H1 (cell line): ENCODE measurements at regions of chr9 and their contacts with region 1.

Region 1: DNA sequence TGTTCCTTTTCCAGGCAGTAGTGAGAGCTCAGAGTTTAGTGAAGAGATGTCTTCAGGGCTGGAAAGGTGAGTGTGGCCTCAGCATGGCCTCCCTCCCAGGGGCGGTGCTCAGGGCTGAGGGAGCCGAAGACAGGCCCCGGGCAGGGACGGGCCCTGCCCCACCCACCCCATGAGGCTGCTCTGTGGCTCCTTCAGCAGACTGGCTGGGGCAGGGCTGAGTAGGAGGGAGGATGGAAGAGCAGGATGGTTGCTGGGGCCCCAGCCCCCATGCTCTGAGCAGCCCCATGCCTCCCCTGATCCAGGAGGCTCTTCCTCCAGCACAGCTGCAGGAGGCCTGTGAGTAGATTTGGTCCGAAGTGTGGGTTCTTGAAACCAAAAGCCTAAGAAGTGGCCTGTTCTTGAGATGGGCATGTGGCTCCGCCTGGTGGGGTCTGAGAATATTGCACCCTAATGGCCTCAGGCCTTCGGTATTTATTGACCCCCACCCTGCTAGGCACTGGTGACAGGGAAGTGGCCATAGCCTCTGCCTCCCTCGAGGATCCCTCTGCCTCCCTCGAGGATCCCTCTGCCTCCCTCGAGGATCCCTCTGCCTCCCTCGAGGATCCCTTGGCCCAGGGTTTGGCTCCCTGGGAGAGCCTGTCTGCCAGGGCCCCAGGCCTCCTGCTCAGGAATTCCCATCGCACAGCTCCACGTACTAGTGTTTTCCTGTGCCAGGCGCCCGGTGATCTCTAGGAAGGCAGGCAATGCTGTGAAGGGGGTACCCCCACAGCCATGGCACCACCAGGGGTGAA is 65.4 kb upstream of the GARNL3 start:
- DNase-seq: peak; percentile 77 to 98
- H3K4me3 ChIP-seq: no peak overlapping the region
- H3K27ac ChIP-seq: no peak overlapping the region
- H3K4me1 ChIP-seq: peaks cover 0 to 4% (median under 1%) of the 10 kb centered on the region in 4 experiments; a peak in 4 of 7 replicates
- H3K27me3 ChIP-seq: no peaks in the 10 kb centered on the region
- CTCF ChIP-seq: peak; percentile 79 to 94 (median 93)
- EP300 ChIP-seq: no peak
- POLR2A ChIP-seq: no peak
- RAD21 ChIP-seq: peak; percentile 97 to 99

Region 2: DNA sequence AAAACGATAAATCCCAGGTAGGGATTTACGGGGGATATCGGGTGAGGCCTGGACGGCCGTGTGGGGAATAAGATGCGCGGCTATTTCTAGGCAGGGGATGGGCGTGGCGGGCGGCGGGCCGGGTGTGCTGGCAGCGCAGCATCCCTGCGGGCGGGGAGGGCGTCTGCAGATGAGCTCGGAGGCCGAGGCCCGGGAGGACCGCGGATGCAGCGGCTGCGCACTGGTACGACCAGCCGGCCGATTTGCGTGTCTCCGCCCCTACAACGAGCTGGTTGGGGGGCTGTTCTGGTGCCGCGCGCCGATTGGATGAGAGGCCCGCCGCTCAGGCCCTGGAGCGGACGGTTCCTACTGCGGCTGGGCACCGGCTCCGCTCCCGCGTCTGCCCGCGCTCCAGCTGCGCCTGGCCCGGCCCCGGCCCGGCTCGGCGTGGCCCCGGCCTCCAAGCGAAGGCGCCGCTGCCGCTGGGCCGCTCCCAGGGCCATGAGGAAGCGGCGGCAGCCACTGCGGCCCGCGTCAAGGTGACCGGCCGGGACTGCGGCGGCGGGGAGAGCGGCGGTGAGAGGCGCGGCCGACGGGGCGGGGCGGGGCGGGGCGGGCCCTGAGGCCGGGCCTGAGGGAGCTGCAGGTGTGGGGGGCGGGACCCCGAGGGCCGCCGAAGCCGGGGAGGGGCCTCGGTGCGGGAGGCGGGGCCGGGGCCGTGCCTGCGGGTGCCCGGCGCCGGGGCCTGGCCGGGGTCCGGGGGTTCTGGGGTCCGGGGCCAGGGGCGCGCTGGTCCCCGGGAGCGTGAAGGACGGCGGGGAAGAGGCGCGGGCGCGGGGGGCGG is 284.5 kb before region 1 on chr9 and contains the start of gene RALGPS1:
- CTCF ChIA-PET with region 1: interaction called, 11 read pairs
- POLR2A ChIA-PET with region 1: no interaction called
- DNase-seq: peak; percentile 91 to 92
- H3K4me3 ChIP-seq: peak within 1 kb of the TSS; percentile 61 to 85 (median 69)
- H3K27ac ChIP-seq: no peak within 1 kb of the TSS
- H3K4me1 ChIP-seq: peaks cover 6 to 19% (median 12%) of the 10 kb centered on the region in 4 experiments
- H3K27me3 ChIP-seq: peaks cover 0 to 11% (median 2%) of the 10 kb centered on the region in 4 experiments; a peak in 3 of 7 replicates
- CTCF ChIP-seq: no peak
- EP300 ChIP-seq: no peak
- POLR2A ChIP-seq: peak in 1 of 2 experiments; percentile 62; a peak in 2 of 3 replicates
- RAD21 ChIP-seq: no peak
- total RNA-seq, gene RALGPS1: 22.9 and 23.5 TPM in 2 replicates

Region 3: GRCh38 chr9:126939821-126940221 is 259.4 kb before region 1 on chr9:
- CTCF ChIA-PET with region 1: interaction called, 166 read pairs
- POLR2A ChIA-PET with region 1: interaction called, 4 read pairs
- DNase-seq: no peak
- H3K4me3 ChIP-seq: no peak overlapping the region
- H3K27ac ChIP-seq: no peak overlapping the region
- H3K4me1 ChIP-seq: peaks cover 0 to 4% (median 3%) of the 10 kb centered on the region in 4 experiments; a peak in 4 of 7 replicates
- H3K27me3 ChIP-seq: no peaks in the 10 kb centered on the region
- CTCF ChIP-seq: no peak
- EP300 ChIP-seq: no peak
- POLR2A ChIP-seq: no peak
- RAD21 ChIP-seq: no peak

Region 4: DNA sequence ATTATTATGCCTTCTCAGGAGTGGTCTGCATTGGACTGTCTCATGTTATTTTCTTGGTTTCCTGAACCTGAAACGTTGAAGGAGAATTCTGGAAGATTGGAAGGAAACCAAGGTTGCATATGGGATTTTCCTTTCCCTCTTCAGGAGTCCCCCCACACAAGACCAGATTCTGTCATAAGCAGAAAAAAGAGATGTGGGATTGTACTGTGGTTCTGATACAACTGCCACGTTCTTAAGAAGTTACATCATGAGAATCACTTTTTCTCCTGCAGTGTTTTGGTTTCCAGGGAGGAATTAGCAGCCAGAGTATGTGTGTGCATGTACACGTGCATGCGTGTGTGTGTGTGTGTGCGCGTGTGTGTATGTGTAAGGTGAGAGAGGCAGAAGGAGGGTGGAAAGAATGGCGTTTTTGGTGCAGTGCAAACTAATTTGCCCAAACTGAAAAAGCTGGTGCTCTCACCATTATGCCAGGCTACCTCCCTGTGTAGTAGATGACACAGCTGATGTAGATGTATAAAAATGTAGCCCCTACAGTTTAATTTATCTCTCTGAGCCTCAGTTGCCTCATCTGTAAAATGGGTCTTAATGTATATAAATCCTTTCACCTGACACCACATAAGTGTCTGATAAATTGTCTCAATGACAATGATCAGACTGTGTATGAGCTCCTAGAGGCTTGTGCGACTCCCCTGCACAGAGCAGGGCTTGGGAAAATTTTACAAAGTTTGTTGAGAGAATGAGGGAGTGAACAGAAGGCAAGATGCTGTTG is 246.0 kb before region 1 on chr9:
- CTCF ChIA-PET with region 1: interaction called, 168 read pairs
- POLR2A ChIA-PET with region 1: no interaction called
- DNase-seq: no peak
- H3K4me3 ChIP-seq: no peak overlapping the region
- H3K27ac ChIP-seq: no peak overlapping the region
- H3K4me1 ChIP-seq: no peaks in the 10 kb centered on the region
- H3K27me3 ChIP-seq: no peaks in the 10 kb centered on the region
- CTCF ChIP-seq: no peak
- EP300 ChIP-seq: no peak
- POLR2A ChIP-seq: no peak
- RAD21 ChIP-seq: no peak

Region 5: GRCh38 chr9:127122176-127123063 is 76.8 kb before region 1 on chr9 and contains the start of gene ANGPTL2:
- CTCF ChIA-PET with region 1: interaction called, 14 read pairs
- POLR2A ChIA-PET with region 1: no interaction called
- DNase-seq: peak; percentile 73 to 90
- H3K4me3 ChIP-seq: peak within 1 kb of the TSS; percentile 47 to 69 (median 64)
- H3K27ac ChIP-seq: peak within 1 kb of the TSS; percentile 56
- H3K4me1 ChIP-seq: peaks cover 9 to 17% (median 11%) of the 10 kb centered on the region in 4 experiments
- H3K27me3 ChIP-seq: no peaks in the 10 kb centered on the region; a peak in 2 of 7 replicates
- CTCF ChIP-seq: no peak
- EP300 ChIP-seq: peak in 1 of 2 experiments; percentile 50; a peak in 1 of 3 replicates
- POLR2A ChIP-seq: peak in 1 of 2 experiments; percentile 84; a peak in 2 of 3 replicates
- RAD21 ChIP-seq: no peak; a peak in 1 of 4 replicates
- total RNA-seq, gene ANGPTL2: 10.6 and 10.7 TPM in 2 replicates

Region 6: DNA sequence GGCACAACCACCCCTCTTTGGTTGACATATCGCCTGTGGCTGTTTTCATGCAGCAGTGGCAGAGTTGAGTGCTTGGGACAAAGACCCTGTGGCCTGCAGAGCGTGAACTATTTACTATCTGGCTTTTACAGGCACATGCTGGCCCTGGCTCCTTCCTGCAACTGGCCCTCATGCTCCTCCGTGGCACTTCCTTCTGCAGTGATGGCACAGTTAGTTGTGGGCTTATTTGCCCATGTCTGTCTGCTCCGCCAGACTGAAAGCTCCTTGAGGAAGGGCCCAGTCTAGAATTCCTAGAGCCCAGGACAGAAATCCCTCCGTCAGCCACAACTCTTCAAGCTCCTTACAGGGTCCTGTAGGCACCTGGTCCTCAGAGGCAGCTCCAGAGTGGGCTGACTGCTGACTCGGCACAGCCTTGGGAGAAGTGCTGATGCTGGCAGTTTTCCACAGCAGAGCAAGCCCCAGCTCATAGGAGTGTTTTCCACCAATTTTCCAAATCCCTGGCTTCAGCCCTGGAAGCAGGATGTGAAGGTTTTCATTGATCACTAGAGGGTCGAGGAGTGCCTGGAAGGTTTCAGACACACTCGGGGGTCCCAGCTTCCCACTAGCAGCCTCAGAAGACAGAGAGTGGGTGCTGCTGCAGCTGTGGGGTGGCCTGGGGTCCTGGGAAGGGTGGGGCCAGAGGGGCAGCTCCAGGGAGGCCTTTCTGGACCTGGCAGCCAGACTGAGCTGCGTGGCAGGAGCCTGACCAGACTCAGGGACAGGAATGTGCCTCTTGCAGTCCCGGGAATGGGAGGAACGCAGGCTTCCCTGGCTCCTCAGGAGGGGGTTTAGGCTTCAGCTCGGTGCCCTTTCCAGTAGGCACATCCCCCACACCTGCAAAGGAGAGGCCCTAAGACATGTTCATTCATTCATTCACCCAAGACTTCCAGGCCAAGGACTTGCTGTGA is 20.2 kb before region 1 on chr9:
- CTCF ChIA-PET with region 1: interaction called, 27 read pairs
- POLR2A ChIA-PET with region 1: interaction called, 3 read pairs
- DNase-seq: no peak
- H3K4me3 ChIP-seq: no peak overlapping the region
- H3K27ac ChIP-seq: 0 out of 2 replicates have a peak overlapping the region, but pooled peaks have one; percentile 38
- H3K4me1 ChIP-seq: peaks cover 0 to 6% (median under 1%) of the 10 kb centered on the region in 4 experiments; a peak in 4 of 7 replicates
- H3K27me3 ChIP-seq: no peaks in the 10 kb centered on the region
- CTCF ChIP-seq: no peak
- EP300 ChIP-seq: no peak
- POLR2A ChIP-seq: no peak
- RAD21 ChIP-seq: no peak

Region 7: GRCh38 chr9:127214421-127215267 is 15.4 kb after region 1 on chr9:
- CTCF ChIA-PET with region 1: interaction called, 87 read pairs
- POLR2A ChIA-PET with region 1: no interaction called
- DNase-seq: peak in 1 of 2 experiments; percentile 75
- H3K4me3 ChIP-seq: no peak overlapping the region
- H3K27ac ChIP-seq: no peak overlapping the region
- H3K4me1 ChIP-seq: peaks cover 2 to 14% (median 9%) of the 10 kb centered on the region in 4 experiments
- H3K27me3 ChIP-seq: no peaks in the 10 kb centered on the region
- CTCF ChIP-seq: peak; percentile 79 to 88 (median 87)
- EP300 ChIP-seq: no peak
- POLR2A ChIP-seq: no peak
- RAD21 ChIP-seq: peak; percentile 82 to 88

Region 8: DNA sequence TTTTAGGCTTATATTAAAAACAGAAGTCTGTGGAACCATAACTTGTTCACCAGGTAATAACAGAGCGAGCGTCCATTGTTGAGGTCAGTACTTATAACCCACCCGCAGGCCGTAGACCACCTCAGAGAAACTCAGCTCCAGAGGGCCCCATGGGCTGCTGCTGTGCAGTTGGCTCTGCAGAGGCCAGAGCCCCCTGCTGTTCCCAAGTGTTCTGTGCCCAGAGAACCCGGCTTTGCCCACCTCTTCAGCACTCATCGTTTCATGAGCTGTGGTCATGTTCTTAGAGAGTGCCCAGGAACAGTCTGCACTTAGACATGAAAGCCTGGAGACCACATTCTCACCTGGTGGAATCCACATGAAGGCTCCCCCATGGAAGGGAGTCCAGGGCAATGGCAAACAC is 147.4 kb after region 1 on chr9:
- CTCF ChIA-PET with region 1: no interaction called
- POLR2A ChIA-PET with region 1: no interaction called
- DNase-seq: no peak
- H3K4me3 ChIP-seq: no peak overlapping the region
- H3K27ac ChIP-seq: no peak overlapping the region
- H3K4me1 ChIP-seq: peaks cover 0 to 4% (median 2%) of the 10 kb centered on the region in 4 experiments; a peak in 4 of 7 replicates
- H3K27me3 ChIP-seq: no peaks in the 10 kb centered on the region
- CTCF ChIP-seq: no peak
- EP300 ChIP-seq: no peak
- POLR2A ChIP-seq: no peak
- RAD21 ChIP-seq: no peak